ENCODE measurements at regions of chr16 and their contacts with region 1.

Region 1: GRCh38 chr16:68085259-68086071 is at the start of gene NFATC3:
- DNase-seq: peak; percentile 97 to 100 (median 99)
- ATAC-seq: peak; percentile 75
- H3K4me3 ChIP-seq: peak within 1 kb of the TSS; percentile 93
- H3K4me3 Mint-ChIP-seq: peak within 1 kb of the TSS; percentile 94
- H3K27ac ChIP-seq: peak within 1 kb of the TSS; percentile 91 to 92
- H3K27ac Mint-ChIP-seq: peak within 1 kb of the TSS; percentile 89
- H3K4me1 ChIP-seq: peaks cover 50% of the 10 kb centered on the region
- H3K4me1 Mint-ChIP-seq: peaks cover 75% of the 10 kb centered on the region
- H3K27me3 ChIP-seq: no peaks in the 10 kb centered on the region
- H3K27me3 Mint-ChIP-seq: no peaks in the 10 kb centered on the region
- CTCF ChIP-seq: no peak
- total RNA-seq, gene NFATC3: 84.8 to 94.4 TPM

Region 2: GRCh38 chr16:67246934-67247697 is 838.3 kb before region 1 on chr16 and contains the start of gene FHOD1:
- CTCF ChIA-PET with region 1: no interaction called
- POLR2A ChIA-PET with region 1: no interaction called
- intact Hi-C with region 1: loop called in 1 of 2 experiments (anchors 10 kb)
- DNase-seq: peak; percentile 86 to 99 (median 96)
- ATAC-seq: peak; percentile 74
- H3K4me3 ChIP-seq: peak within 1 kb of the TSS; percentile 87
- H3K4me3 Mint-ChIP-seq: peak within 1 kb of the TSS; percentile 97
- H3K27ac ChIP-seq: peak within 1 kb of the TSS; percentile 65 to 74
- H3K27ac Mint-ChIP-seq: peak within 1 kb of the TSS; percentile 68
- H3K4me1 ChIP-seq: peaks cover 72% of the 10 kb centered on the region
- H3K4me1 Mint-ChIP-seq: peaks cover 42% of the 10 kb centered on the region
- H3K27me3 ChIP-seq: peaks cover 0 to 6% of the 10 kb centered on the region in 2 experiments
- H3K27me3 Mint-ChIP-seq: peaks cover 13% of the 10 kb centered on the region
- CTCF ChIP-seq: no peak
- total RNA-seq, gene FHOD1: 21.1 to 26.0 TPM

Region 3: DNA sequence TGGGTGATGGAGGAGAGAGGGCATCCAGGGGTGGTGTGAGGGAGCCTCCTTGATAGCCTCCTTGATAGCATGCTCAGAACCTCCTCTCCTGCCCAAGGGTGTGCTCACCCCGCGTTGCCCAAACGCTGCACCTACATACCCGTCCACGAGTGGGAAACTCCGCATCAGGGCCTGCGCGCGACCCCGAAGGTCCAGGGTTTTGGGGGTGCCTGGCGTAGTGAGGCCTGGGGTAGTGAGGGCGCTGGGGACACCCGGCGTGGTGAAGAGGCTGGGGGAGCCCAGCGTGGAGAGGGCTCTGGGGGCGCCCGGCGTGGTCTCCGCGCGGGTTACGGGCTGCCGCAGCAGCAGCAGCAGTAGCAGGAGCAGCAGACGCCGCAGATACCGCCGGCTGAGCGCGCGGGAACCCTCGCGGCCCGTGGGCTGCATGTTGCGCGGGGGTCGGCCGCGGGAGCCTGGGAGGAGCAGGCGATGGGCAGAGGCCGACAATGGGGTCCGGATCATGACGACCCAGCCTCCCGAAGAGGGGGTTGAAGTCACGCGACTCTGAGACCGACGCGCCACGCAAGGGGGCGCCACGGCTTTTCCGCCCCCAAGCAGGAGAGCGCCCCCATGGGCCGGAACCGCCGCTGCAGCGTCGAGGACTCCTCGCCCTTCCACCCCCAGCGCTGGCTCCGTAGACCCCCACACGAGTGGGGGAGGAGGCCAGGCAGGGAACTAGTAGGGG is 105.3 kb before region 1 on chr16 and contains the start of gene DPEP3:
- CTCF ChIA-PET with region 1: no interaction called
- POLR2A ChIA-PET with region 1: interaction called, 11 read pairs
- intact Hi-C with region 1: no loop called
- DNase-seq: peak in 2 of 14 experiments; percentile 31 to 49
- ATAC-seq: no peak
- H3K4me3 ChIP-seq: no peak within 1 kb of the TSS
- H3K4me3 Mint-ChIP-seq: no peak within 1 kb of the TSS
- H3K27ac ChIP-seq: no peak within 1 kb of the TSS
- H3K27ac Mint-ChIP-seq: no peak within 1 kb of the TSS
- H3K4me1 ChIP-seq: peaks cover 23% of the 10 kb centered on the region
- H3K4me1 Mint-ChIP-seq: peaks cover 23% of the 10 kb centered on the region
- H3K27me3 ChIP-seq: no peaks in the 10 kb centered on the region
- H3K27me3 Mint-ChIP-seq: no peaks in the 10 kb centered on the region
- CTCF ChIP-seq: no peak
- total RNA-seq, gene DPEP3: 0.53 to 0.63 TPM

Region 4: DNA sequence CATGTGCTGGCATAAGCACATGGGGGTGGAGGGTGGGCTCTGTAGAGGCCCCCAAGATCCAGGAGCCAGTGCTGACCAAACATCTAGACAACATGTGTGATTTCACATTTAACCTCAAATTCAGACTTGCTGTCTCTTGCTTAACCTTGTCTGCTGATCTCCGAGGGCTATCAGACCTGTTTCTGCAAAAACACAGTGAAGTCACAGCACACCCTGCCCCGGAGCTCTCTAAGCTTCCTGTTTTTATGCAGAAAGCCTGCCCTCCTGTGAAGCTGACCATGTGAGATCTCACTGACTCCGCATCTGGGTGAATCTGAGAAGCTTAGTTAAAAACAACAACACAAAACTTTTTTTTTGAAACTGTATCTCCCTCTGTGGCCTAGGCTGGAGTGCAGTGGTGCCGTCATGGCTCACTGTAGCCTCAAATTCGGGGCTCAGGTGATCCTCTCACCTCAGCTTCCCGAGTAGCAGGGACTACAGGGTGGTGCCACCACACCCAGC is 79.6 kb before region 1 on chr16:
- CTCF ChIA-PET with region 1: no interaction called
- POLR2A ChIA-PET with region 1: interaction called, 41 read pairs
- intact Hi-C with region 1: no loop called
- DNase-seq: peak; percentile 35 to 82 (median 61)
- ATAC-seq: peak; percentile 96
- H3K4me3 ChIP-seq: no peak overlapping the region
- H3K4me3 Mint-ChIP-seq: peak overlapping the region; percentile 74
- H3K27ac ChIP-seq: peak overlapping the region; percentile 62 to 84
- H3K27ac Mint-ChIP-seq: peak overlapping the region; percentile 97
- H3K4me1 ChIP-seq: peaks cover 49% of the 10 kb centered on the region
- H3K4me1 Mint-ChIP-seq: peaks cover 48% of the 10 kb centered on the region
- H3K27me3 ChIP-seq: no peaks in the 10 kb centered on the region
- H3K27me3 Mint-ChIP-seq: no peaks in the 10 kb centered on the region
- CTCF ChIP-seq: no peak

Region 5: DNA sequence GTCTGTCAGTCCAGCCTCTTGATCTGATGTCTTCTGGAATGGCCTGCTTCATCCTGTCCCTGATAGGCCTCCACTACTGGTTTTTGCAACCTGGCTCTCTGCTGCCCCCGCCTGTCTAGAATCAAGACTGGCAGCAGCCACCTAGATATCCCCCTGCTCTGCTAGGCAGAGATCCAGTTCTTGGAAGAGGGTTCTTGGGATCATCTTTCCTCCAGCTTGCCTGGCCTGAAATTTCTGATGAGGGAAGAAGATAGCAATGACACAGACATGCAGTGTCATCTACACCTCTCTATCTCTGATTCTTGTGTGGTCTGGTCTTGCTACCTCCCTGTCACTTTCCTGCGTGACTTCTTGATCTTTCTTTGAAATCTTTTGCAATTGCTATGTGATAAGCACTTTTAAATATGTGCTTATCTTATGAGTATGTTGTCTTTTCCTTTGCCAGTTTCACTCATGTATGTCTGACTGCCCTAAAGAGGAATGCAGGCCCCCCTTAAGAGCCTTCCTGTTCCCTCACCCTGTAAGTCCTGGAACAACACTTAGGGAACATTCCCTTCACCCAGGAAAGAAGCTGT is 20.6 kb before region 1 on chr16:
- CTCF ChIA-PET with region 1: interaction called, 11 read pairs
- POLR2A ChIA-PET with region 1: interaction called, 174 read pairs
- intact Hi-C with region 1: no loop called
- DNase-seq: peak; percentile 55 to 82 (median 68)
- ATAC-seq: peak; percentile 83
- H3K4me3 ChIP-seq: no peak overlapping the region
- H3K4me3 Mint-ChIP-seq: peak overlapping the region; percentile 22
- H3K27ac ChIP-seq: peak overlapping the region in 1 of 2 donors; percentile 55
- H3K27ac Mint-ChIP-seq: peak overlapping the region; percentile 50
- H3K4me1 ChIP-seq: peaks cover 86% of the 10 kb centered on the region
- H3K4me1 Mint-ChIP-seq: peaks cover 84% of the 10 kb centered on the region
- H3K27me3 ChIP-seq: no peaks in the 10 kb centered on the region
- H3K27me3 Mint-ChIP-seq: no peaks in the 10 kb centered on the region
- CTCF ChIP-seq: peak; percentile 87

Region 6: DNA sequence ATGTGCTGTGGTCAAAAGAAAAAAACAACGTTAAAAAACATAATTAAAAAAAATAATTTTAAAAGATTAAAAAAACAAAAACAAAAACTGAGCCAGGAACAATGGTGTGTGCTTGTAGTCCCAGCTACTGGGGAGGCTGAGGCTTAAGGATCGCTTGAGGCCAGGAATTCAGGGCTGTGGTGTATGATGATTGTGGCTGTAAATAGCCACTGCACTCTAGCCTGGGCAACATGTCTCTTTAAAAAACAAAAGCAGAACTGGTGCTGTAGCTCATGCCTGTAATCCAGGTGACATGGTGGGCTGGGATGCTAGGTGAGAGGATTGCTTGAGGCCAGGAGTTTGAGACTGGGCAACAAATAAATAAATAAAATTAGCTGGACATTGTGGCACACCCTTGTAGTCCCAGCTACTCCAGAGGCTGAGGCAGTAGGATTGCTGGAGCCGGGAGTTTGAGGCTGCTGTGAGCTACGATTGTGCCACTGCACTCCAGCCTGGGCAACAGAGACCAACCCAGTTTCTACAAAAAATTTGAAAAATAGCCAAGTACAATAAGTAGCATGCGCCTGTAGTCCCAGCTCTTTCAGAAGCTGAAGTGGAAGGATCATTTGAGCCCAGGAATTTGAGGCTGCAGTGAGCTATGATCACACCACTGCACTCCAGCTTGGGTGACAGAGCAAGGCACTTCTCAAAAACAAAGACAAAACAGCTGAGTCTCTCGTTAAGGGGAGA is 43.3 kb after region 1 on chr16:
- CTCF ChIA-PET with region 1: interaction called, 3 read pairs
- POLR2A ChIA-PET with region 1: interaction called, 9 read pairs
- intact Hi-C with region 1: loop called in 1 of 2 experiments (anchors 5 kb)
- DNase-seq: no peak
- ATAC-seq: no peak
- H3K4me3 ChIP-seq: no peak overlapping the region
- H3K4me3 Mint-ChIP-seq: no peak overlapping the region
- H3K27ac ChIP-seq: no peak overlapping the region
- H3K27ac Mint-ChIP-seq: peak overlapping the region; percentile 83
- H3K4me1 ChIP-seq: peaks cover 27% of the 10 kb centered on the region
- H3K4me1 Mint-ChIP-seq: peaks cover 68% of the 10 kb centered on the region
- H3K27me3 ChIP-seq: no peaks in the 10 kb centered on the region
- H3K27me3 Mint-ChIP-seq: no peaks in the 10 kb centered on the region
- CTCF ChIP-seq: no peak

Region 7: GRCh38 chr16:69494993-69495392 is 1409.5 kb after region 1 on chr16:
- CTCF ChIA-PET with region 1: no interaction called
- POLR2A ChIA-PET with region 1: no interaction called
- intact Hi-C with region 1: no loop called
- DNase-seq: peak in 6 of 14 experiments; percentile 5 to 52 (median 38)
- ATAC-seq: no peak
- H3K4me3 ChIP-seq: no peak overlapping the region
- H3K4me3 Mint-ChIP-seq: no peak overlapping the region
- H3K27ac ChIP-seq: no peak overlapping the region
- H3K27ac Mint-ChIP-seq: no peak overlapping the region
- H3K4me1 ChIP-seq: no peaks in the 10 kb centered on the region
- H3K4me1 Mint-ChIP-seq: no peaks in the 10 kb centered on the region
- H3K27me3 ChIP-seq: no peaks in the 10 kb centered on the region
- H3K27me3 Mint-ChIP-seq: no peaks in the 10 kb centered on the region
- CTCF ChIP-seq: no peak

Measured in CD4-positive, alpha-beta T cell (primary cell).